Ascending aorta (tissue), 2 donors: ENCODE measurements at regions of chr13 and their contacts with region 1.

Region 1: DNA sequence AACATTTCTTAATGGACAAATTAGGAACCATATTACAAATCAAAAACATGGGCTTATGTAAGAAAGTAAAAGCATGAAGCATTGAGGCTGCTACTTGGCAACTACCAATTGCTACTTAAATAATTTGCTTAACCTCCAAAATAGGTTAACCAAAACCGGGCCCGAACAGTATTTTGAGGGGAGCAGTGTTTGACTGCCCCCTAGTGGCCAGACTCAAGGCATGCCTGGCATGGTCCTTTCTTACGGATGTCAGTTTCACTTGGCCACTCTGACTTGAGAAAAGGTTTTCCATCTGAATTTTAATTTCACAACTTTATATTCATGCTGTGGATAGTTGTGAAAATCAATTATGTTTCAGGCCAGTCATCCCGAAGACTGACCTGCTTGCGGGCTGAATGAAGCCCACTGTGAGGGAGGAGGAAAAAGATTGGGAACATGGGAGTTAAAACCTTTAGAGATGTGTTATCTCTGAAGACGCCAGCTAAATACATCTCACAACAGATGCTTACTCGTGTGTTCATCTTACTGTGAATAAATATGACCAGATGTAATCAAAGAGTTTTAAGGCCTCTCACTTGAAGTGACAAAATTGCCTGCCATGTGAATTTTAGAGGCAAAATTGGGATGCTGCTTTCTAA is 2.9 kb downstream of the RXFP2 start:
- DNase-seq: peak in 1 of 2 donors; percentile 82
- H3K4me3 ChIP-seq: peak overlapping the region in 1 of 2 donors; percentile 32
- H3K27ac ChIP-seq: no peak overlapping the region
- H3K4me1 ChIP-seq: no peaks in the 10 kb centered on the region
- H3K27me3 ChIP-seq: no peaks in the 10 kb centered on the region
- CTCF ChIP-seq: peak; percentile 66 to 97 (median 92)

Region 2: DNA sequence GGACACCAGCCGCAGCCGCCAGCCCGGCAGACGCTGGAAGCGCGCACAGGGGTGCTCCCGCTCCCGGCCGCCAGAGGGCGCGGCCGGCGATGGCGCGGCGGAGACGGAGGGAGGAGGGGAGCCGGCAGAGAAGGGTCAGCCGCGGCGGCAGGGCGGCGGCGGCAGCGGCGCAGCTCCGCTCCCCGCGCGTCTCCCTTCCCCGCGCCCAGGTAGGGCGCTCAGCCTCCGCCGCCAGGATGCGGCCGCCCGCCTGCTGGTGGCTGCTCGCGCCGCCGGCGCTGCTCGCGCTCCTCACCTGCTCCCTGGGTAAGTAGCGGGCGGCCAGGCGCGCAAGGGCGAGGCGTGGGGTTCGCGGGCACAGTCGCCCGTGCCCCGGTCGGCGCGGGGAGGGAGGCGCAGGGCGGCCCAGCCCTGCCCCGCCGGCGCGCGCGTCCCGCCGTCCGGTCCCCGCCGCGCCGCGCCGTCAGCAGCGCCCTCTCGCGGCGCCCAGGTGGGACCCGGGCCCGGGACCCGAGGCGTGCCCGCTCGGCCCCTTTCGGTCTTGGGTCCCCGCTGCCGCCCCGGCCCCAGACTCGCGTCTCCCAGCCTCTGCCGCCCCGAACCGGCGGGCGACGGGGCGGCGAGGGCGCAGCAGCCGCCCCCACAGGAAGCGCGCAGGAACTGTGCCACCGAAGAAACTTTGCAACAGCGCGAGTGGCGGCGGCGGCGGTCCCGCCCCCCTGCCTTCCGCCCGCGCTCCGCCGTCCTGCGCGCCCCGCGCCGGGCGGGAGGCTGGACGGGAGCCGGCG is 542.2 kb before region 1 on chr13 and contains the start of gene B3GLCT:
- intact Hi-C with region 1: loop called (anchors 10 kb)
- DNase-seq: peak in 1 of 2 donors; percentile 88
- H3K4me3 ChIP-seq: peak within 1 kb of the TSS; percentile 88 to 97
- H3K27ac ChIP-seq: peak within 1 kb of the TSS; percentile 88 to 100
- H3K4me1 ChIP-seq: peaks cover 5 to 15% of the 10 kb centered on the region in 2 donors
- H3K27me3 ChIP-seq: no peaks in the 10 kb centered on the region
- CTCF ChIP-seq: peak; percentile 58 to 96 (median 77)
- total RNA-seq, gene B3GLCT: 8.8 TPM

Region 3: DNA sequence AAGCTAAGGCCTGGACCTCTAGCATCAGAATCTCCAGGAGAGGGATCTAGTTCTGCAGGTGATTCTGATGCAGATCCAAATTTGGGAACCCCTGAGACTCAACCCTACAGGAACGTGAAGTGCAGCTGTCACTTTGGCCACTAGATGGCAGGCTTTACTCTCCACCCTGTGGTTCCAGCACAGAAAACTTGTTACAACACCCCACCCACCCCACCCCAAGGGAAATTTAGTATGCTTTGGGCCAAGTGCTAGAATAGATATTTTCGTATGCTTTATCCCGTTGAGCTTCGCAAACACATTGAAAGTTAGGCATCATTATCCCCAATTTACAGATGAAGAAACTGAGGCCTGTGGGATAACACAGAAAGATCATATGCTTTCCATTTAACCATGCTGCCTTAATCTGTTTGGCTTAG is 310.5 kb before region 1 on chr13:
- intact Hi-C with region 1: loop called (anchors 1 kb)
- DNase-seq: peak in 1 of 2 donors; percentile 76
- H3K4me3 ChIP-seq: no peak overlapping the region
- H3K27ac ChIP-seq: no peak overlapping the region
- H3K4me1 ChIP-seq: no peaks in the 10 kb centered on the region
- H3K27me3 ChIP-seq: no peaks in the 10 kb centered on the region
- CTCF ChIP-seq: peak in 2 of 3 experiments; percentile 85 to 86

Region 4: GRCh38 chr13:31538067-31539042 is 203.9 kb before region 1 on chr13:
- intact Hi-C with region 1: loop called (anchors 5 kb)
- DNase-seq: no peak
- H3K4me3 ChIP-seq: no peak overlapping the region
- H3K27ac ChIP-seq: no peak overlapping the region
- H3K4me1 ChIP-seq: no peaks in the 10 kb centered on the region
- H3K27me3 ChIP-seq: no peaks in the 10 kb centered on the region
- CTCF ChIP-seq: peak; percentile 15 to 42 (median 29)

Region 5: DNA sequence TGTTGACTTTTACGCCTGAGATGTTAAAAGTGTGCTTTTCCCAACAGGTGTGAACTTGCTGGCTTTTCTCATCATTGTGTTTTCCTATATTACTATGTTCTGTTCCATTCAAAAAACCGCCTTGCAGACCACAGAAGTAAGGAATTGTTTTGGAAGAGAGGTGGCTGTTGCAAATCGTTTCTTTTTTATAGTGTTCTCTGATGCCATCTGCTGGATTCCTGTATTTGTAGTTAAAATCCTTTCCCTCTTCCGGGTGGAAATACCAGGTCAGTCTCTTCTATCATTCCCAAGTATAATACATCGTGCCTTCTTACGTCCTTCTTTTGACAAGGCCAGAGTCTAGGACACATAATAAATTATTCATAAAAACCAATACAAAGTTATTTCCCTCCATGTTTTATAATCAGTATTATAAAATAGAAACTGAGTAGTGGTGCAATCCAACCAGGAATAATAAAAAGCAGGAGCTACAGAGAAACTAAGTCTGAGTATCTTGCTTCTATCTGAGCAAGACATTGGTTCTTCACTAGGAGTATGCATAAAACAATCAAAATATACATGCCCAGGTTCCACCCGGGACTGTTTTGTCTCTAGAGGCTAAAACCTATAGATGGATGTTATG is 55.0 kb after region 1 on chr13:
- intact Hi-C with region 1: loop called (anchors 1 kb)
- DNase-seq: no peak
- H3K4me3 ChIP-seq: no peak overlapping the region
- H3K27ac ChIP-seq: no peak overlapping the region
- H3K4me1 ChIP-seq: no peaks in the 10 kb centered on the region
- H3K27me3 ChIP-seq: no peaks in the 10 kb centered on the region
- CTCF ChIP-seq: peak; percentile 33 to 64 (median 51)